Naive thymus-derived CD4-positive, alpha-beta T cell (primary cell): ENCODE measurements at regions of chr3 and their contacts with region 1.

Region 1: DNA sequence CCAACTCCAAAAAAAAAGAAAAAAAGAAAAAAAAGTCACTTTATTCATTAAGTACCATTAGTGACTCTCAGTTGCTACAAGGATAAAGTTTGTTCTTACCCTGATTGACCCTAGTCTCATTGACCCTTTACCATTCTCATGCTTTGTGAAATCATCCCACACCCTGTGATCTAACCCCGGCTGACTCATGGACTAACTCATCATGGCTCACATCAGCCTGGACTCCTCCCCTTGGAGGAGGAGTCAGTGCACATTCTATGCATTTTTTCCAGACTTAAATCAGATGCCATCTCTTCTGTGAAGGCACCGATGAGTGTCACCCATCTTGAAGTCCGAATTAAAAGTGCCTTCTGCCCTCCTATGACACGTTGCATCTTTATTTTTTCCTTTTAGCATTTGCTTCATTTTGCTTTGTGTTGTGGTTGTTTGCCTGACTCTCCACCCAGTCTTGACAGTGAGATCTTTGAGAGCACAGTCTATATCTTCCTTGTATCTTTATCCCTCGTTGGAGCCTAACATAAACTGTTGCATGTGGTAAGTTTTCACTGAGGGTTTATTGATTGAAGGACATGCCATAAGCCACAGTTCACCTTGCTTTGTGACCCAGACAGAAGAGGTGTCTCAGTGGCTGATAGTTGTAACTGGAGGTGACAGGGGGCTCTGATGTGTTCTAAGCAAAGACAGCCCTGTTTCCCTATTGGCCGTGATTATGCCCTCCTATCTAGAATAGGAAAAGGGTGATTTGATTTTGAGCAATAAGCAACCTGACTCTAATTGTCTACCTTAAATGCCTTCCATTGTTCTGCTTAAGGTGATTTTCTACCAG is 72.1 kb downstream of the IL1RAP start:
- DNase-seq: peak in 1 of 9 donors; percentile 56
- ATAC-seq: peak; percentile 88
- H3K4me3 ChIP-seq: no peak overlapping the region
- H3K4me3 Mint-ChIP-seq: peak overlapping the region in 4 of 10 donors; percentile 14 to 43 (median 26)
- H3K27ac ChIP-seq: no peak overlapping the region
- H3K27ac Mint-ChIP-seq: peak overlapping the region in 2 of 9 donors; percentile 6 to 84
- H3K4me1 ChIP-seq: peaks cover 4% of the 10 kb centered on the region in 2 donors
- H3K4me1 Mint-ChIP-seq: peaks cover 8 to 50% (median 21%) of the 10 kb centered on the region in 7 donors
- H3K27me3 ChIP-seq: no peaks in the 10 kb centered on the region
- H3K27me3 Mint-ChIP-seq: no peaks in the 10 kb centered on the region

Region 2: GRCh38 chr3:190258634-190259033 is 327.4 kb before region 1 on chr3:
- CTCF ChIA-PET with region 1: no interaction called
- POLR2A ChIA-PET with region 1: no interaction called
- intact Hi-C with region 1: no loop called
- DNase-seq: no peak
- ATAC-seq: no peak
- H3K4me3 ChIP-seq: no peak overlapping the region
- H3K4me3 Mint-ChIP-seq: no peak overlapping the region
- H3K27ac ChIP-seq: no peak overlapping the region
- H3K27ac Mint-ChIP-seq: no peak overlapping the region
- H3K4me1 ChIP-seq: no peaks in the 10 kb centered on the region
- H3K4me1 Mint-ChIP-seq: peaks cover 0 to 5% (median 0%) of the 10 kb centered on the region in 7 donors
- H3K27me3 ChIP-seq: no peaks in the 10 kb centered on the region
- H3K27me3 Mint-ChIP-seq: no peaks in the 10 kb centered on the region

Region 3: GRCh38 chr3:190566043-190566933 is 19.7 kb before region 1 on chr3:
- CTCF ChIA-PET with region 1: no interaction called
- POLR2A ChIA-PET with region 1: interaction called, 3 read pairs
- intact Hi-C with region 1: loop called in 1 of 2 experiments (anchors 1 kb)
- DNase-seq: peak in 2 of 9 donors; percentile 9 to 73
- ATAC-seq: peak; percentile 89
- H3K4me3 ChIP-seq: no peak overlapping the region
- H3K4me3 Mint-ChIP-seq: peak overlapping the region in 1 of 10 donors; percentile 65
- H3K27ac ChIP-seq: no peak overlapping the region
- H3K27ac Mint-ChIP-seq: peak overlapping the region in 1 of 9 donors; percentile 78
- H3K4me1 ChIP-seq: no peaks in the 10 kb centered on the region
- H3K4me1 Mint-ChIP-seq: peaks cover 0 to 58% (median 0%) of the 10 kb centered on the region in 7 donors
- H3K27me3 ChIP-seq: no peaks in the 10 kb centered on the region
- H3K27me3 Mint-ChIP-seq: no peaks in the 10 kb centered on the region

Region 4: DNA sequence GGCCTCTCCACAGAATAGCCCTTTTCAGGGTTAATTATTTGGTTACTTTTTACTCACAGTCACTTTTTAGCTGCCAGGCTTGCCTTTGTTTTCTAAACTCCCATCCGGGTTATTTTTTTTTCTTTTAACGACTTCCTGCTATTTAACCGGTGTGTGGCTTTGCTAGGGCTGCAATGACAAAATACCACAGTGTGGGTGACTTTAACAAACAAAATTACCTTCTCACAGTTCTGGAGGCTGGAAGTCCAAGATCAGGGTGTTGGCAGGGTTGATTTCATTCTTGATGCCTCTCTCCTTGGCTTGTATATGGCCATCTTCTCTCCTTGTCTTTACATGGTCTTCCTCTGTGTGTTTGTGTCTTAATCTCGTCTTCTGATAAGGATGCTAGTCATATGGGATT is 19.4 kb after region 1 on chr3:
- CTCF ChIA-PET with region 1: no interaction called
- POLR2A ChIA-PET with region 1: no interaction called
- intact Hi-C with region 1: loop called in 1 of 2 experiments (anchors 2 kb)
- DNase-seq: no peak
- ATAC-seq: no peak
- H3K4me3 ChIP-seq: no peak overlapping the region
- H3K4me3 Mint-ChIP-seq: peak overlapping the region in 1 of 10 donors; percentile 7
- H3K27ac ChIP-seq: no peak overlapping the region
- H3K27ac Mint-ChIP-seq: peak overlapping the region in 1 of 9 donors; percentile 35
- H3K4me1 ChIP-seq: no peaks in the 10 kb centered on the region
- H3K4me1 Mint-ChIP-seq: peaks cover 0 to 28% (median 4%) of the 10 kb centered on the region in 7 donors
- H3K27me3 ChIP-seq: no peaks in the 10 kb centered on the region
- H3K27me3 Mint-ChIP-seq: no peaks in the 10 kb centered on the region